Activated T-helper 1 cell treated with anti-CD3 and anti-CD28 coated beads, Interleukin-12 subunit alpha, Interleukin-12 subunit beta, Interleukin-2, Interleukin-4 antibody, amounts not matched to agents 30 ng/mL and 10 ng/mL and 1 ng/mL, durations not matched to agents 14 hours and 24 hours and 36 hours (primary cell): ENCODE measurements at regions of chr6 and their contacts with region 1.

Region 1: GRCh38 chr6:21438237-21438985 is 155.1 kb upstream of the SOX4 start:
- DNase-seq: peak; percentile 40
- H3K4me3 Mint-ChIP-seq: peak overlapping the region; percentile 72
- H3K27ac Mint-ChIP-seq: peak overlapping the region; percentile 86
- H3K4me1 Mint-ChIP-seq: peaks cover 20% of the 10 kb centered on the region
- H3K27me3 Mint-ChIP-seq: peaks cover 11% of the 10 kb centered on the region

Region 2: GRCh38 chr6:20401205-20402091 is 1037.0 kb before region 1 on chr6 and contains the start of gene E2F3:
- intact Hi-C with region 1: loop called (anchors 5 kb)
- DNase-seq: peak; percentile 99
- H3K4me3 Mint-ChIP-seq: peak within 1 kb of the TSS; percentile 99
- H3K27ac Mint-ChIP-seq: peak within 1 kb of the TSS; percentile 97
- H3K4me1 Mint-ChIP-seq: peaks cover 42% of the 10 kb centered on the region
- H3K27me3 Mint-ChIP-seq: peaks cover 2% of the 10 kb centered on the region
- total RNA-seq, gene E2F3: 30.3 and 30.5 TPM in 2 replicates

Region 3: GRCh38 chr6:20599302-20600051 is 838.9 kb before region 1 on chr6:
- intact Hi-C with region 1: loop called (anchors 1 kb)
- DNase-seq: no peak
- H3K4me3 Mint-ChIP-seq: no peak overlapping the region
- H3K27ac Mint-ChIP-seq: no peak overlapping the region
- H3K4me1 Mint-ChIP-seq: peaks cover 9% of the 10 kb centered on the region
- H3K27me3 Mint-ChIP-seq: no peaks in the 10 kb centered on the region

Region 4: DNA sequence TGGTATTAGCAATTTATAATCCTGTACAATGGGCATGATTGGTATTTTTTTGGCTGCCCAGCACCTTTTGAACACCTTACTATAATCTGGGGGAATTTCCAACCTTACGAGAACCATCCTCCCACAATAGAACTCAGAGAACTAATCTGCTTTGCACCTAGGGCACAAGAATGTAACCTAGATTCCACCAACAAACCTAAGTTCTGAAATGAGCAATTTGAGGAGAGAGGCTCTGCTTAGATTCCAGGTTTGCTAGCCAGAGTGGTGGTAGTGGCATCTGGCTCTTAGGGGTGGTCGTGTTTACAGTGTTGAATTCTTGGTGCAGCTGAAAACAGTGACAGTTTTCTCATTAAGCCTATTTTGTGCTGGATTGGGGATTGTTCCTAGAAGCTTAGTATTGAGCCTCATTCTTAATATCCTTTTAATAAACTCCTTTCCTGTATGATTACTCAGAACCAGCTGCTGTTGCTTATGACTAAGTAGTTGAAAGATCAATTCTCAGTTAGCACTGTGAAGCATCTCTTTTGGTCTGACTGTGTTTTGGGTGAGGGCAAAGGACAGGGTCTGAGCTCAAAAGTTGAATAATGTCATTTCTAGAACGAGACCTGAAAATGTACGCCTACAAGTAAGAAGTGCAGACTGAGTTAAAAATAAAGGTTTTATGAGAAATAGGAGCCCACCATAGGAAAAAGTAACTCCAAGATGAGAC is 518.6 kb before region 1 on chr6:
- intact Hi-C with region 1: loop called (anchors 1 kb)
- DNase-seq: no peak
- H3K4me3 Mint-ChIP-seq: no peak overlapping the region
- H3K27ac Mint-ChIP-seq: peak overlapping the region; percentile 82
- H3K4me1 Mint-ChIP-seq: peaks cover 20% of the 10 kb centered on the region
- H3K27me3 Mint-ChIP-seq: no peaks in the 10 kb centered on the region

Region 5: GRCh38 chr6:21263531-21264287 is 174.7 kb before region 1 on chr6:
- intact Hi-C with region 1: loop called (anchors 2 kb)
- DNase-seq: no peak
- H3K4me3 Mint-ChIP-seq: no peak overlapping the region
- H3K27ac Mint-ChIP-seq: peak overlapping the region; percentile 41
- H3K4me1 Mint-ChIP-seq: peaks cover 20% of the 10 kb centered on the region
- H3K27me3 Mint-ChIP-seq: no peaks in the 10 kb centered on the region

Region 6: DNA sequence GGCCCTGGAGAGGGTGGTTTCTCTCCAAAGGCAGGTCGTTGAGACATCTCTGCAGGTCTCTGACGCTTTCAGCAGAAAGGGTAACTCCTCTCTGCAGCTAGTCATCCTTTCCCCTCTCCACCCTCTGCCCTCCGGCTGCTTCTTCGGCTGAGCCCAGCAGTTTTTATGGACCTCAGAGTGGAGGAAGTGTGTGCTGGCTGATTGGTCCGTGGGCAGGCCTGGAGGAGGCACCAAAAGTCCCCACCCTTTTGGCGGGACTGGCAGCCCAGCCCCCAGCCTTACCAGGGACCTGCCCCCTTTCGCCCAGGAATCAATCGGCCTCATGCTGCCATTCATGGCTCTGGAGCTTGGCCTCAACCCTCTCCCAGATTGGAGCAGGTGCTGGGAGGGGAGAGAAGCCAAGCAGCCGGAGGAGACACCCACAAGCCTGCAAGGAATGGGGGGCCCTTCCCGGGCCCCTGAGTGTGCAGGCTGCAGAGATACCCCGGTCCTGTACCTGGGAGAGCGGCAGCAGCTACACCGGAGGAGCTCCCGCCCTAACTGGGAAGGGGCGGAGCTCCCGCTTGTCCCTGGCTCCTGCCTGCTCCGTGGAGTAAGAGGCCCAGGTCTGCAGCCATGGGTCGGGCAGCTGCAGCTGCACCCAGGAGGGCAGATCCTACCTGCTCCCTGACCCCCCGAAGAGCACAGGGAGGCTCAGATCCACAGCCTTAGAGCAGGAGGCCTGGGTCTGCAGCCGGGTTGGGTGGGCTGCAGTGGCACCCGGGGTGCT is 15.1 kb before region 1 on chr6:
- intact Hi-C with region 1: no loop called
- DNase-seq: no peak
- H3K4me3 Mint-ChIP-seq: no peak overlapping the region
- H3K27ac Mint-ChIP-seq: no peak overlapping the region
- H3K4me1 Mint-ChIP-seq: no peaks in the 10 kb centered on the region
- H3K27me3 Mint-ChIP-seq: peaks cover 14% of the 10 kb centered on the region

Region 7: GRCh38 chr6:22025468-22026160 is 587.2 kb after region 1 on chr6:
- intact Hi-C with region 1: no loop called
- DNase-seq: peak; percentile 1
- H3K4me3 Mint-ChIP-seq: no peak overlapping the region
- H3K27ac Mint-ChIP-seq: peak overlapping the region; percentile 25
- H3K4me1 Mint-ChIP-seq: peaks cover 37% of the 10 kb centered on the region
- H3K27me3 Mint-ChIP-seq: no peaks in the 10 kb centered on the region

Region 8: DNA sequence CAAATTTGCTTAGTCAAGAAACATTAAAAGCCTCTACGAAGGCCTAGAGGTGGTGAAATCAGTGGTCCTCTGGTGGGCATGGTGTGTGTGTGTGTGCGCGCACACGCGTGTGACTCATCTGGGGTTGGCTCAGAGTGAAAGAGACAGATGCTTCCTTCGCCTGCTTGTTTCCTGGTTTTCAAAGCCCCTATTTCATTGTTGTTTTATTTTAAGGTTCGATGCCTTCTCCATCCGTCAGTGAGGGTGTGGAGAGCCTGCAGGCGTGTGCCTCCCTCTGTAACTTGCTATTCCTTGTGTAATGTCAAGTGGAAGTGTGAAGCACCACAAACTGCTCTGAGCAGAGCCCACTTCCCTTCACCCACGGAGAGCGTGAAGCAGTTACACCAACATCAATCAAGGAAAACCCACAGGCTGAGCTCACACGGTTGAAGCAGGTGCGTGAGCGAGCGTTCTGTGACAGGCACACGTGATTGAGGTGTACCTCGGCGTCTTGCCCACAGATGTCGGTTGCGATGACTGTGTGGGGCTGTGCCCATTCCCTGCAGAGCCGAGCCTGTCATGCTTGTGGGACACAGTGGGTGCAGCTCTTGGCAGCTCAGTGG is 624.5 kb after region 1 on chr6:
- intact Hi-C with region 1: loop called (anchors 1 kb)
- DNase-seq: peak; percentile 48
- H3K4me3 Mint-ChIP-seq: peak overlapping the region; percentile 52
- H3K27ac Mint-ChIP-seq: peak overlapping the region; percentile 56
- H3K4me1 Mint-ChIP-seq: peaks cover 25% of the 10 kb centered on the region
- H3K27me3 Mint-ChIP-seq: peaks cover 3% of the 10 kb centered on the region

Region 9: DNA sequence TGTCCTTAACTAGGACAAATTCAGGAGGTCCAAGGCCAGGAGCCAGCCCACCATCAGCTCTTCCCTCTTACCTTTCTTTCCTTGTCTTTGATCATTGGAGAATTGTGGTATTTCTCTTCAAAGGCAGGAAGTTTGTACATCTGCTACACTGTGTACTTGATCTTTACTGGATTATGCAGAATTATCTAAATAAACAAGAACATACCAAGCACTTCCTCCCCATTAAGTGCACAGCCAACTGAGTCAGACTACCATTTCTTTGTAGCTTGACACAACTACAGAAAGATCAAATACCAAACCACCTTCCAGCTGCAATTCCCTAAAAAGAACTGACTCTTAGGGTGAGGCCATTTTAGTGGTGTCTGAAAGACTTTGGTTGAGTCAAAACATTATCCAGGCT is 1326.1 kb after region 1 on chr6:
- intact Hi-C with region 1: no loop called
- DNase-seq: no peak
- H3K4me3 Mint-ChIP-seq: no peak overlapping the region
- H3K27ac Mint-ChIP-seq: no peak overlapping the region
- H3K4me1 Mint-ChIP-seq: no peaks in the 10 kb centered on the region
- H3K27me3 Mint-ChIP-seq: no peaks in the 10 kb centered on the region